ENCODE measurements at regions of chr13 and their contacts with region 1.

Region 1: GRCh38 chr13:109779074-109779473 is 7.3 kb downstream of the IRS2 start:
- DNase-seq: no peak
- ATAC-seq: no peak
- H3K4me3 ChIP-seq: peak overlapping the region; percentile 64
- H3K27ac ChIP-seq: no peak overlapping the region
- H3K4me1 ChIP-seq: peaks cover 51% of the 10 kb centered on the region
- H3K27me3 ChIP-seq: peaks cover 0 to 2% (median 0%) of the 10 kb centered on the region in 3 donors
- CTCF ChIP-seq: no peak

Region 2: DNA sequence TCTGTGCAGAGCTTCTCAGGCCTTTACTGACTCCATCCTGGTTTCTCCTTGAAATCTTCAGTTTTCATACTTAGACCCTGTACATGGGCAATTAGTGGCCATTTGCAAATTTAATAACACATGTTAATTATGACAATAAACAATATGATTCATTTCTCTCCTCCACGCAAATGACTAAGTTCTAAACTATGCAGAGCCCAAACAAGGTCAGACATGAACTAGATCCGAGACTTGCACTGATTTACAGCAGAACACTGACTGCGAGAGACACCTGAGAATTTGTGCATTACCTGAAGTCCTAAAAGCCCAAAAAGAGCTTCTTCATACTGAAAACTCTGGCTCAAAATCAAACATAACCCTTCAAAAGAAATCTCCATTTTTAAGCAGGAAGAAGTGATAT is 627.8 kb before region 1 on chr13:
- intact Hi-C with region 1: loop called (anchors 2 to 10 kb)
- DNase-seq: no peak
- ATAC-seq: no peak
- H3K4me3 ChIP-seq: no peak overlapping the region
- H3K27ac ChIP-seq: no peak overlapping the region
- H3K4me1 ChIP-seq: peaks cover 10% of the 10 kb centered on the region
- H3K27me3 ChIP-seq: peaks cover 0 to 2% (median 0%) of the 10 kb centered on the region in 3 donors
- CTCF ChIP-seq: no peak

Region 3: GRCh38 chr13:110853235-110853721 is 1074.2 kb after region 1 on chr13:
- intact Hi-C with region 1: no loop called
- DNase-seq: no peak
- ATAC-seq: peak; percentile 42 to 70 (median 56)
- H3K4me3 ChIP-seq: peak overlapping the region; percentile 6
- H3K27ac ChIP-seq: no peak overlapping the region
- H3K4me1 ChIP-seq: no peaks in the 10 kb centered on the region
- H3K27me3 ChIP-seq: peaks cover 0 to 5% (median 0%) of the 10 kb centered on the region in 3 donors
- CTCF ChIP-seq: no peak